Activated CD4-positive, alpha-beta T cell treated with anti-CD3 and anti-CD28 coated beads for 36 hours (primary cell): ENCODE measurements at regions of chr7 and their contacts with region 1.

Region 1: GRCh38 chr7:88111136-88111743 is 108.6 kb downstream of the SRI start:
- DNase-seq: no peak
- ATAC-seq: no peak
- H3K4me3 Mint-ChIP-seq: no peak overlapping the region
- H3K27ac Mint-ChIP-seq: no peak overlapping the region
- H3K4me1 Mint-ChIP-seq: peaks cover 5% of the 10 kb centered on the region
- H3K27me3 Mint-ChIP-seq: no peaks in the 10 kb centered on the region

Region 2: GRCh38 chr7:87506246-87507180 is 604.7 kb before region 1 on chr7:
- CTCF ChIA-PET with region 1: no interaction called
- POLR2A ChIA-PET with region 1: no interaction called
- intact Hi-C with region 1: loop called (anchors 1 to 2 kb)
- DNase-seq: no peak
- ATAC-seq: no peak
- H3K4me3 Mint-ChIP-seq: no peak overlapping the region
- H3K27ac Mint-ChIP-seq: no peak overlapping the region
- H3K4me1 Mint-ChIP-seq: no peaks in the 10 kb centered on the region
- H3K27me3 Mint-ChIP-seq: no peaks in the 10 kb centered on the region

Region 3: GRCh38 chr7:87797798-87798403 is 313.3 kb before region 1 on chr7:
- CTCF ChIA-PET with region 1: interaction called, 11 read pairs
- POLR2A ChIA-PET with region 1: no interaction called
- intact Hi-C with region 1: loop called (anchors 1 to 5 kb)
- DNase-seq: no peak
- ATAC-seq: no peak
- H3K4me3 Mint-ChIP-seq: no peak overlapping the region
- H3K27ac Mint-ChIP-seq: no peak overlapping the region
- H3K4me1 Mint-ChIP-seq: no peaks in the 10 kb centered on the region
- H3K27me3 Mint-ChIP-seq: peaks cover 5% of the 10 kb centered on the region

Region 4: DNA sequence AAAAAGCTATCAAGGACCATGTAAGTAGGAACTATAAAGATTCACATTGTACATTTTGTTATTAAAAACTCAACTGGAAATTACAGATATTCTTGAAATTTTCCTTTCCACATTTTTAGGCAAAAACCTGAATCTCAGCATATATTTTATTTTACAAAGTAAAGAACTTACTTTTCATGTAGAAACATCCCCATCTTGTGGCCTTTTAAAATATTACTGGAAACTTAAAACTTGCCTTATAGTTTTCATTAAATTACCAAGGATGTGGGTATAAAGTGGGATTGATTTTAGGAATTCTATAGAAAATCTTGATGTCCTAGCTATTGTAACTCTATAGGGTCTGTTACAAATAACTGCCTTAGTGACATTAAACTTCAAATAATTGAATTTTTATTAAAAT is 224.4 kb before region 1 on chr7:
- CTCF ChIA-PET with region 1: interaction called, 4 read pairs
- POLR2A ChIA-PET with region 1: no interaction called
- intact Hi-C with region 1: loop called in 1 of 2 experiments (anchors 5 kb)
- DNase-seq: no peak
- ATAC-seq: no peak
- H3K4me3 Mint-ChIP-seq: no peak overlapping the region
- H3K27ac Mint-ChIP-seq: no peak overlapping the region
- H3K4me1 Mint-ChIP-seq: peaks cover 6% of the 10 kb centered on the region
- H3K27me3 Mint-ChIP-seq: no peaks in the 10 kb centered on the region

Region 5: DNA sequence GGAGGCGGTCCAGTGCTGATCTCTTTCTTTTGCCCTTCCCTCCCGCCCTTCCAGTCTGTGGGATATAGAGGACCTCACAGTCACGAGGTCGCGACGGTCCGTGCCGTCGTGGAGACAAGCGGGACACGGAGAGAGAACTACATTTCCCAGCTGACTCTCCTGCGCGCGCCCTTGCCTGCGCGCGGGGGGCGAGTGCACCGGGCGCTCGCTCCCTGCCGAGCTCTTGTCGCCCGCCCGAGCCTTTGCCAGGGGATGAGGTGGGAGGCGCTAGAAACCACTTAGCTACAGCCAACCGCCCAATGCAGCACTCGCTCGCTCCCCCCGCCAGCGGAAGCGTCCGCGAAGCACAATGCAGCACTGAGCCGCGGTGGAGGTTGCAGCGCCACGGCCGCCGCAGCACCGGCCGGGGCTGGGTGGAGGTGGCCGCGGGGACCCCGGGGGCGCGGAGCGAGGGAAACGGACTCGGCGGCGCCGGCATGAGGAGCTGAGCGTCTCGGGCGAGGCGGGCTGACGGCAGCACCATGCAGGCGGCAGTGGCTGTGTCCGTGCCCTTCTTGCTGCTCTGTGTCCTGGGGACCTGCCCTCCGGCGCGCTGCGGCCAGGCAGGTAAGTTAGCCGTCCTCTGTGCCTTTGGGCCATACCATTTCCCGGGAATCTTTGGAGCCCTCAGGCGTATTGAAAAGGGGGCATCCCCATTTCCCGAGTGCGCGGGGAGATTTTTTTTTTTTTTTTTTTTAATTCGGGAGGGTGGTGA is 177.1 kb before region 1 on chr7 and contains the start of gene ADAM22:
- CTCF ChIA-PET with region 1: no interaction called
- POLR2A ChIA-PET with region 1: no interaction called
- intact Hi-C with region 1: loop called in 1 of 2 experiments (anchors 10 kb)
- DNase-seq: peak; percentile 89
- ATAC-seq: peak; percentile 98
- H3K4me3 Mint-ChIP-seq: peak within 1 kb of the TSS; percentile 81
- H3K27ac Mint-ChIP-seq: peak within 1 kb of the TSS; percentile 81
- H3K4me1 Mint-ChIP-seq: peaks cover 9% of the 10 kb centered on the region
- H3K27me3 Mint-ChIP-seq: peaks cover 5% of the 10 kb centered on the region
- total RNA-seq, gene ADAM22: 1.1 to 1.8 TPM